Ovary (tissue), 10 donors: ENCODE measurements at regions of chr17 and their contacts with region 1.

Region 1: DNA sequence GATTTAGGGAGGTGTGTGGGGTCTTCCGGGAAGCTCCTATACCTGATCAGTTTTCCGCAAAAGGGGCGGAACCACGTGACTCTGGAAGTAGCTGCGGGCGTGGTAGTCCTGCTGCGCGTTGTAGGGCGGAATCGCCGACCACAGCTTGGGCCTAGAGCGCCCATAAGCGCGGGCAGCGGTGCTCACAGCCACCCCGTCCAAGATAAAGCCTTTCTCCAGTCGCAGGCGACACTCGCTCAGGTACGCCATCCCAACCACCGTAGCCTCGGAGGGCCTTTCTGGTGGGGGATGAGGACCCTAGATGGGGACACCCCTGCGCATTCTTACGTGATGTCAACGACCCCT is 12.4 kb downstream of the RPL23 start:
- DNase-seq: peak in 4 of 5 donors; percentile 38 to 52 (median 50)
- H3K4me3 ChIP-seq: no peak overlapping the region
- H3K27ac ChIP-seq: no peak overlapping the region
- H3K4me1 ChIP-seq: no peaks in the 10 kb centered on the region
- H3K27me3 ChIP-seq: no peaks in the 10 kb centered on the region
- CTCF ChIP-seq: no peak
- EP300 ChIP-seq: no peak
- POLR2A ChIP-seq: no peak

Region 2: GRCh38 chr17:38789185-38789584 is 51.9 kb before region 1 on chr17:
- intact Hi-C with region 1: loop called in 1 of 4 experiments (anchors 10 kb)
- DNase-seq: no peak
- H3K4me3 ChIP-seq: no peak overlapping the region
- H3K27ac ChIP-seq: no peak overlapping the region
- H3K4me1 ChIP-seq: peaks cover 2% of the 10 kb centered on the region
- H3K27me3 ChIP-seq: no peaks in the 10 kb centered on the region
- CTCF ChIP-seq: no peak
- EP300 ChIP-seq: no peak
- POLR2A ChIP-seq: no peak